Endothelial cell of umbilical vein (primary cell): ENCODE measurements at regions of chr15 and their contacts with region 1.

Region 1: DNA sequence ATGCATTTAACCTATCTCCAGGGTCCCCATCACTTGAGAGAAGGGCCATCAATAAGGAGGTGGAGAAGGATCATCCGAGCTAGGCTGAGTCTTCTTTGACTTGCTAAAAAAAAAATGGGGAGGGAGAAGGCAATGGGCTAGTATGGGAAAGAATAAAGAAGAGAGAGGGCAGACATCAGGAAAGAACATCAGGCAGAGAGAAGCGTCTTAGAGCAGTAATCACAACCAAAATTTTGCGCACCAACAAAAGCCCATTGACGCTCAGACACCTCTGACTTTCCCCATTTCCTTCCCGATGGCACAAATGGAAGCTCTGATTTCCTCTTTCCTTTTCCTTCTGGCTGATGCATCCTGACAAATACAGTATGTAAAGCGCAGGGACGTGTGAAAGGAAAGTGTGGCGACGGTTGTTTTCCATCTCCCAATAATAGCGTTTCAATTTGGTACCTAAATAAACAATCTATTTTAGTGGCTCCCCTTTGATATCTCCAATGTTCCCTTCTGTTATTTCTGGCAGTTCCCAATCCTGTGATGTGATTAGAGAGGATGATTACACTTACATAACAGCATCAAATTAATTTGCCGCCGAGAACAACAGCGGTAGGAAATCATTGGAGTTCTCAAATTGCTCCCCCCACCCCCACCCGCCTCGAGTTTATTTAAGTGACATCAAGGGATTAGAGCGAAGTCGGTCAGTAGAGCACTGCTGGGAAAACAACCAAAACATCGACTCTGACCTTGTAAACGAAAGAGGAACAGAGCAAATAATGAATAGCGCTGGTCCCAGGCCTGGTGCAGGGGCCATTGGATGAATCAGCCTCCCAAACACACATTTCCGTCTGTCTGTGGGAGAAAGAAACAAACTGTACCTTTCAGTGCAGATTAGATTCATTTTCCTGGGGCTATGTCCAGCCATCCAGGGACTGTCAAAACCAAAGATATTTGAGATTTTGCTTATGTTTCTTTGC is 273.3 kb upstream of the ICE2 start:
- DNase-seq: peak; percentile 88
- H3K4me3 ChIP-seq: peak overlapping the region in 2 of 3 experiments; percentile 6 to 47
- H3K27ac ChIP-seq: peak overlapping the region; percentile 65
- H3K4me1 ChIP-seq: peaks cover 22% of the 10 kb centered on the region
- H3K27me3 ChIP-seq: no peaks in the 10 kb centered on the region
- CTCF ChIP-seq: no peak
- POLR2A ChIP-seq: no peak

Region 2: DNA sequence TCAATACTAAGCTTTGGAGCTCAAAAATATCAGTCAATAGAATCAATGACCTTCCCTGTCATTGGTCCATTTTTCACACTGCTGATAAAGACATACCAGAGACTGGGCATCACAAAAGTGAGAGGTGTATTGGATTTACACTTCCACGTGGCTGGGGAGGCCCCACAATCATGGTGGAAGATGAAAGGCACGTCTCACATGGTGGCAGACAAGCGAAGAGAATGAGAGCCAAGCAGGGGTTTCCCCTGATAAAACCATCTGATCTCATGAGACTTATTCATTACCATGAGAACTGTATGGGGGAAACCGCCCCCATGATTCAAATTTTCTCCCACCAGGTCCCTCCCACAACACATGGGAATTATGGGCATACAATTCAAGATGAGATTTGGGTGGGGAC is 436.4 kb before region 1 on chr15:
- CTCF ChIA-PET with region 1: no interaction called
- POLR2A ChIA-PET with region 1: no interaction called
- dilution Hi-C with region 1: no loop called
- intact Hi-C with region 1: no loop called
- DNase-seq: no peak
- H3K4me3 ChIP-seq: no peak overlapping the region
- H3K27ac ChIP-seq: no peak overlapping the region
- H3K4me1 ChIP-seq: no peaks in the 10 kb centered on the region
- H3K27me3 ChIP-seq: peaks cover 12 to 16% of the 10 kb centered on the region in 2 experiments
- CTCF ChIP-seq: no peak
- POLR2A ChIP-seq: no peak

Region 3: DNA sequence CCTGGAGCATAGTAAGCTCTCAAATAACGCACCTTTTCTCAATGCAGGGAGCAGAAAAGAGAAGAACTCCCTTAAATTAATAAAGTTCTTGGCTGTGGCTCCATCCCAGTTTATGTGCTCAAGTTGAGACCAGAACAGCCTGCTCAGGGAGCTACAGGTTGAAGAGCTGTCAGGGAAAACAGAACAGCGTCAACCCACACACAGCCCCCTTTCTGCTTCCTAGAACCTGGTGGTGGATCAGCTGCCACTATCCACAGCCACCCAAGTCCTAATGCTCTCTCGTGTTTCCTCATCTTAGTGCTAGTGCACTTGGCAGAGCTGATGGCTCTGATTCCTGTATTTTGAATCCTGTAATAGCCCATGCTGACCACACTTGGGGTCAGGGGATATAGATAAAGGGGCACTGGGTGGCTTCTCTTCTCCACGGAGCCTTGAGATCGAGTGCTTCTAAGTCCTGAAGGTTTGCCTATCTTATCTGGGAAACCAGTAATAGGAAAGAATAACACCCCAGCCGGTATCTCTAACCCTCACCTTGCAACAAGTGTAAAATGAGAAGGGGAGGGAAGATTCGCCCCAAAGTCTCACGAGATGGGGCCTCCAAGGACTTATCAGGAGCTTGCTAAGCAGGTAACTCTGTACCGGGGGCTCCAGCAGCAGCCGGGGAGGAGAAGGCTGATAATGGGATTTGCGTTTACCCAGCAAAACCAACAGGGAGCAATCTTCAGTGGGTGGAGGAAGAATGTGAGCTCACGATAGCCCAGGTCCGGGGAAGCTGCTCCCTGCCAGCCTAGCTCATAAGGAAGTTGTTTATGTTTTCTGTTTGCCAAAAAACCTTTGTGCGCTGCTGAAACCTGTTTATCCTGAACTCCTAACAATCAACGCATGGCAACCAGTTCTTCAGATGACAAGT is 137.2 kb before region 1 on chr15:
- CTCF ChIA-PET with region 1: no interaction called
- POLR2A ChIA-PET with region 1: no interaction called
- dilution Hi-C with region 1: no loop called
- intact Hi-C with region 1: no loop called
- DNase-seq: no peak
- H3K4me3 ChIP-seq: no peak overlapping the region
- H3K27ac ChIP-seq: no peak overlapping the region
- H3K4me1 ChIP-seq: peaks cover 25% of the 10 kb centered on the region
- H3K27me3 ChIP-seq: no peaks in the 10 kb centered on the region
- CTCF ChIP-seq: no peak
- POLR2A ChIP-seq: no peak

Region 4: DNA sequence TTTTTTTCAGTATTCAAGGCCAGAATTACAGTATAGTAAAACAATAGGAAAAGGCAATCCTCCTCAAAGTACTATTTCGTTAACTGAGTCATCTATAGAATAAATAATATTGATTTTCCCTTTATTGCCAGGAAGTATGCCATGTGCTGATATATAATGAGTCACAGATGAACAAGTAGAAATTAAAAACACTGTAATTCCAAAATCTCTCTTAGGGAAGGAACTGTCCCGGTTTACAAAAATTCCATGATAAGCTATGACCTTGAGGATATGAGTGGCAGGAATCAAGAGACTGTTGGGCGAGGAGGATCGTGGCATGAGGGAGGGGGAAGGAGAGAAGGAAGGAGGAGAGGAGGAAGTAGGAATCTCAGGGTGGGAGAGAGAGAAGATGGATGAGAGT is 107.4 kb before region 1 on chr15:
- CTCF ChIA-PET with region 1: no interaction called
- POLR2A ChIA-PET with region 1: no interaction called
- dilution Hi-C with region 1: no loop called
- intact Hi-C with region 1: loop called (anchors 1 kb)
- DNase-seq: peak; percentile 87
- H3K4me3 ChIP-seq: no peak overlapping the region
- H3K27ac ChIP-seq: peak overlapping the region; percentile 46
- H3K4me1 ChIP-seq: peaks cover 23% of the 10 kb centered on the region
- H3K27me3 ChIP-seq: no peaks in the 10 kb centered on the region
- CTCF ChIP-seq: no peak
- POLR2A ChIP-seq: no peak

Region 5: DNA sequence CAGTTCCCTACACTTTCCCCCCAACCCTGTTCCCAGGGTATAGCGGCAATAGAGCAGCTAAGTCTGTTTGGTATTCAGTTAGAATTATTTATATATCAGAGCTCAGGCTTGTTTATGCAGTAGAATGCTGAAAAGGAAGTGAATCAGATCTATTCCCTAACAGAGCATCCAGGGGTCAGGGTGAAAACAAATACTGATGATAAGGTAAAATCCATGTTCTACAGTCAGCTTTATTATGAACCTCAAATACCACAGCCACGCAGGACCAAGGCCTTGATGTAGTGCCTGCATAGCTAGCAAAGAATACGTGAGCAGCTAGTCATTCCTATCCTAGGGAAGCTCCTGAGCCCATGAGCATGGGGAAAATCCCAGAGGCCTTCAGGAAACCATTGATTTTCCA is 43.6 kb before region 1 on chr15:
- CTCF ChIA-PET with region 1: interaction called, 3 read pairs
- POLR2A ChIA-PET with region 1: no interaction called
- dilution Hi-C with region 1: no loop called
- intact Hi-C with region 1: loop called (anchors 5 kb)
- DNase-seq: peak; percentile 89
- H3K4me3 ChIP-seq: no peak overlapping the region
- H3K27ac ChIP-seq: peak overlapping the region; percentile 46
- H3K4me1 ChIP-seq: peaks cover 24% of the 10 kb centered on the region
- H3K27me3 ChIP-seq: no peaks in the 10 kb centered on the region
- CTCF ChIP-seq: no peak
- POLR2A ChIP-seq: no peak

Region 6: GRCh38 chr15:61051569-61052031 is 299.3 kb after region 1 on chr15:
- CTCF ChIA-PET with region 1: no interaction called
- POLR2A ChIA-PET with region 1: no interaction called
- dilution Hi-C with region 1: no loop called
- intact Hi-C with region 1: loop called (anchors 1 kb)
- DNase-seq: peak; percentile 70
- H3K4me3 ChIP-seq: no peak overlapping the region
- H3K27ac ChIP-seq: no peak overlapping the region
- H3K4me1 ChIP-seq: no peaks in the 10 kb centered on the region
- H3K27me3 ChIP-seq: no peaks in the 10 kb centered on the region
- CTCF ChIP-seq: peak; percentile 68 to 78
- POLR2A ChIP-seq: no peak